ENCODE measurements at regions of chr17 and their contacts with region 1.

Region 1: GRCh38 chr17:82551779-82552457 is 32.4 kb downstream of the FOXK2 start:
- DNase-seq: peak; percentile 95
- H3K4me3 ChIP-seq: no peak overlapping the region
- H3K27ac ChIP-seq: peak overlapping the region; percentile 38 to 81 (median 48)
- H3K4me1 ChIP-seq: peaks cover 58 to 76% (median 68%) of the 10 kb centered on the region in 4 donors
- H3K27me3 ChIP-seq: no peaks in the 10 kb centered on the region
- CTCF ChIP-seq: peak; percentile 77 to 86 (median 81)
- EP300 ChIP-seq: no peak
- POLR2A ChIP-seq: no peak

Region 2: DNA sequence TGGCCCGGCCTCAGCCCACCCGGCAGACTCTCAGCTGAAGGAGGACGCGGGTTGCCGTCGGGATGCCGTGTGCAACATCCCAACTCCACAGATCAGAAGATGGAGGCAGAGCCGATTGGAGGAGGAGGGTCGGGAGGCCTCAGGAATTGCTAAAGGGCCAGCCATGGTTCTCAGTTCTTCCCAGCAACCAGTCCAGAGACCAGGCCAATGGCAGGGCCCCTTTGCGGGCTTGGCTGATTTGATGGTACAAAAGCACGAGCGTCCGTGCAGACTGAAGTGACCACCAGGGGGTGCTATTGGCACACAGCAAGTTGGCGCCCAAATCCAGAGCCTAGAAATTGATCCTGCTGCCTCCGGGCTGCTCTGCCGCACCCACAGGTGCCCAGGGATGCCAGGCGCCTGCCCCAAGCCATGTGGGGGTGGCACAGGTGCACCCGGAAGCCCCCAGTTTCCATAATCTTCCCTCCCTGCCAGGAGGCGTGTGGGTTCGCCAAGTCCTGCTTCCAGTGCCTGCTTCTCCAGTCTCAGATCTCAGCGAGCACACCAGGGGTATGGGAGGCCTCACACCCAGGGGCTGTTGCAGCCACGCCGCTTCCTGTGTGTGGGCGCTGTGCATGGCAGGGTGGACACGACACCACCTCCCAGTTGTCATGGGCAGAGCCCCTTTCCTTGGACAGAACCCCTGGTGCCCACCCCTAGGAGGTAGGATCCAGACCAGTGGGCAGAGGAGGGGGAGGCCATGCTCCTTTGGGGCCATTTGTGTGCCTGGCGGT is 200.0 kb before region 1 on chr17:
- intact Hi-C with region 1: loop called (anchors 5 kb)
- DNase-seq: peak; percentile 96
- H3K4me3 ChIP-seq: no peak overlapping the region
- H3K27ac ChIP-seq: no peak overlapping the region
- H3K4me1 ChIP-seq: peaks cover 6 to 23% (median 17%) of the 10 kb centered on the region in 4 donors
- H3K27me3 ChIP-seq: peaks cover 0 to 27% (median 0%) of the 10 kb centered on the region in 4 donors
- CTCF ChIP-seq: peak; percentile 91 to 95 (median 94)
- EP300 ChIP-seq: no peak
- POLR2A ChIP-seq: no peak

Region 3: DNA sequence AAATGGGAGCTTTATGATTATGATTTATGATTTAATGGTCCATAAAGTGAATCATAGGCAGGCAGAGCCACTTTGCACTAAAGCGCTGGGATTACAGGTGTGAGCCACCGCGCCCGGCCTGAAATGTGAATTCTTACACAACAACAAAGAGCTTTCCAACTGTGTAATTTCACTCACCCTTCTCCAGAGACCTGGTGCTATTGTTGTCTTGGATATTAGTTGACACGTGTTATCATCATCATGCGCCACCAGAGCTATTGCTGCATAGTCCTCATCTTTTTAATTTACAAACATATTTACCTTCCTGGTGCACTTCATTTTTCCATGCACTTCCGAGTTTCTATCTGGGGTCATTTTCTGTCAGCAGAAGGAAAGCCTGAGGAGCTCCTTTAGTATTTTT is 185.2 kb before region 1 on chr17:
- intact Hi-C with region 1: no loop called
- DNase-seq: no peak
- H3K4me3 ChIP-seq: no peak overlapping the region
- H3K27ac ChIP-seq: no peak overlapping the region
- H3K4me1 ChIP-seq: peaks cover 11 to 20% (median 18%) of the 10 kb centered on the region in 4 donors
- H3K27me3 ChIP-seq: peaks cover 0 to 41% (median 22%) of the 10 kb centered on the region in 4 donors
- CTCF ChIP-seq: no peak
- EP300 ChIP-seq: no peak
- POLR2A ChIP-seq: no peak

Region 4: DNA sequence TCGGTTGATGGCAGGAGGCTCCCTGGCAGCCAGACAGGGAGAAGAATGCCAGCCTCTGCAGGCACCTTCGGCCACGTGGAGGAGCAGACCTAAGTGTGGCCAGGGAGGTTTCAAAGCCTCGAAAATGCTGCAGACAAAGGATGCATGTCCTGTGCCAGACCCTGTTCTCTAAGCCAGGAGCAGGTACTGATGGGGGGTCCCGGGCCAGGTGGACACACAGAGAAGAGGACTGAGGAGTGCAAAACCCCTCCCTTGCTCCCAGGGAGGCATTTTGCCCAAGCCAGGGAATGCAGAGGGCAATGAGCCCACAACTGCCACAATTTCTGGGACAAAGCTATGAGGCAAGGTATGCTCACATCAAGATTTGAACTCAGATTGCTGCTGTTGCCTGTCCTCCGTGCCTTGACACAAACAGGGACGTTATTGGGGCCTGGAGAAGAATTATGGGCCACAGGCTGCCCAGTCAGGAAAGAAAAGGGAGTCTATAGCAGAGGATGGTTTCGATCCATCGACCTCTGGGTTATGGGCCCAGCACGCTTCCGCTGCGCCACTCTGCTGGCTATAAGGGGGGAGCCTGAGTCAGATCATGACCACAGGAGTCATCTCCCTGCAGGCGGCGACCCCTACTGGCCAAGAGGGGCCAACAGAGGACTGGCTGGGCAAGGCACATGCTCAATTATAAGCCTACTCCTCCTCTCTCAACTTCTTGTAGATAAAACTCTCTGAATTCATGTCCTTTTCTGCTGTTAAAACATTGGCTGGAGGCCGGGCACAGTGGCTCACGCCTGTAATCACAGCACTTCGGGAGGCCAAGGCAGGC is 57.5 kb before region 1 on chr17:
- intact Hi-C with region 1: loop called (anchors 2 kb)
- DNase-seq: peak; percentile 98
- H3K4me3 ChIP-seq: peak overlapping the region in 1 of 4 donors; percentile 13
- H3K27ac ChIP-seq: peak overlapping the region; percentile 86 to 95 (median 95)
- H3K4me1 ChIP-seq: peaks cover 24 to 51% (median 49%) of the 10 kb centered on the region in 4 donors
- H3K27me3 ChIP-seq: no peaks in the 10 kb centered on the region
- CTCF ChIP-seq: peak; percentile 87 to 98 (median 94)
- EP300 ChIP-seq: no peak
- POLR2A ChIP-seq: no peak

Region 5: GRCh38 chr17:82518826-82519810 is 32.8 kb before region 1 on chr17 and contains the start of gene FOXK2:
- intact Hi-C with region 1: loop called (anchors 5 kb)
- DNase-seq: peak; percentile 95
- H3K4me3 ChIP-seq: peak within 1 kb of the TSS; percentile 79 to 98 (median 94)
- H3K27ac ChIP-seq: peak within 1 kb of the TSS; percentile 94 to 99 (median 98)
- H3K4me1 ChIP-seq: peaks cover 23 to 40% (median 36%) of the 10 kb centered on the region in 4 donors
- H3K27me3 ChIP-seq: no peaks in the 10 kb centered on the region
- CTCF ChIP-seq: peak in 1 of 3 experiments; percentile 33
- EP300 ChIP-seq: no peak
- POLR2A ChIP-seq: peak; percentile 11
- total RNA-seq, gene FOXK2: 27.0 to 51.6 (median 45.3) TPM

Region 6: DNA sequence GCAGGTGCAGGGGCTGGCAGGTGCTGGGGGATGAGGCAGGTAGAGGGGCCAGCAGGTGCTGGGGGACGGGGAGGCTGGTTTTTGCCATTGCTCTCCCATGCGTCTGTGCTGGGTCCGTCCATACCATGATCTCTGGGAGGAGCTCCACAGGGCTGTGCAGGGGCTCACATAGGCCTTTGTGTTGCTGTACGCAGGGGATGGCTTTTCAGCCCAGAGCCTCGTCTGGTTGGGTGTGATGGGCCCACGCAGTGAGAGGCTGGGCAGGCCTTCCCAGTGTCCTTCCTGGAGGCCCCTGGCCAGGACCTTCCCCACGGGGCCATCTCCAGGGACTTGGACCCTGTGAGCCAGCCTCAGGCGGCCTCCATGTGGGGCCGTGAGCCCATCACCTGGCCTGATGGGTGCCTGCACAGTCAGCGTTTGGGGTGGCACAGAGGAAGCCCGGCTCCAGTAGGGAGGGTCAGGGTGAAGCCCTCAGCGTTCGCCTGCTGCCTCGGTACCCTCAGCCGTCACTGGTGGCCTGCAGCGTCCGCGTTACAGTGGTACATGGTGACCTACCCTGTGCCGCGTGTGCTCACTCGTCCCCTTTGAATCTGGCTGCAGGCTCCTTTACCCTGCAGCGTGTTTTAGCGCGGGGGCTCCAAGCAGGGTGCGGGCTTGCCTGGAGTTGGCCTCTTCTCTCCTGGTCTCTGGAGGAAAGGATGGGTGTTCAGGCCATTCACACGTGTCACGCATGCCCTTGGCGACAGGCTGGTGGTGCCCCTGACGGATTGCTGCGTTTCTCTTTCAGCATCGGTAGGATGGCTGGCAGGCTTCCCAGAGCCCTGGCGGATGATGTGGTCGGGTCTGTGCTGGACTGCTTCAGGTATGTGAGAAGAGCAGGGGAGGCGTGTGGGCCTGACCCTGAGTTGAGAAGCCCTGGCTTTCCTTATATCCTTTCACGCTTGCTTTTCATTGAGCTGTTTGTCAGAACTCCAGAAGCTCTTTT is 257.3 kb after region 1 on chr17:
- intact Hi-C with region 1: no loop called
- DNase-seq: no peak
- H3K4me3 ChIP-seq: no peak overlapping the region
- H3K27ac ChIP-seq: peak overlapping the region in 2 of 4 donors; percentile 27 to 40
- H3K4me1 ChIP-seq: peaks cover 34 to 44% (median 39%) of the 10 kb centered on the region in 4 donors
- H3K27me3 ChIP-seq: no peaks in the 10 kb centered on the region
- CTCF ChIP-seq: no peak
- EP300 ChIP-seq: no peak
- POLR2A ChIP-seq: no peak

Measured in esophagus muscularis mucosa (tissue), 4 donors.